Activated naive CD4-positive, alpha-beta T cell treated with anti-CD3 and anti-CD28 coated beads for 36 hours (primary cell): ENCODE measurements at regions of chr7 and their contacts with region 1.

Region 1: GRCh38 chr7:121994625-121995410 is 121.9 kb downstream of the PTPRZ1 start:
- DNase-seq: peak; percentile 64
- H3K4me3 Mint-ChIP-seq: no peak overlapping the region
- H3K27ac Mint-ChIP-seq: no peak overlapping the region
- H3K4me1 Mint-ChIP-seq: no peaks in the 10 kb centered on the region
- H3K27me3 Mint-ChIP-seq: no peaks in the 10 kb centered on the region

Region 2: DNA sequence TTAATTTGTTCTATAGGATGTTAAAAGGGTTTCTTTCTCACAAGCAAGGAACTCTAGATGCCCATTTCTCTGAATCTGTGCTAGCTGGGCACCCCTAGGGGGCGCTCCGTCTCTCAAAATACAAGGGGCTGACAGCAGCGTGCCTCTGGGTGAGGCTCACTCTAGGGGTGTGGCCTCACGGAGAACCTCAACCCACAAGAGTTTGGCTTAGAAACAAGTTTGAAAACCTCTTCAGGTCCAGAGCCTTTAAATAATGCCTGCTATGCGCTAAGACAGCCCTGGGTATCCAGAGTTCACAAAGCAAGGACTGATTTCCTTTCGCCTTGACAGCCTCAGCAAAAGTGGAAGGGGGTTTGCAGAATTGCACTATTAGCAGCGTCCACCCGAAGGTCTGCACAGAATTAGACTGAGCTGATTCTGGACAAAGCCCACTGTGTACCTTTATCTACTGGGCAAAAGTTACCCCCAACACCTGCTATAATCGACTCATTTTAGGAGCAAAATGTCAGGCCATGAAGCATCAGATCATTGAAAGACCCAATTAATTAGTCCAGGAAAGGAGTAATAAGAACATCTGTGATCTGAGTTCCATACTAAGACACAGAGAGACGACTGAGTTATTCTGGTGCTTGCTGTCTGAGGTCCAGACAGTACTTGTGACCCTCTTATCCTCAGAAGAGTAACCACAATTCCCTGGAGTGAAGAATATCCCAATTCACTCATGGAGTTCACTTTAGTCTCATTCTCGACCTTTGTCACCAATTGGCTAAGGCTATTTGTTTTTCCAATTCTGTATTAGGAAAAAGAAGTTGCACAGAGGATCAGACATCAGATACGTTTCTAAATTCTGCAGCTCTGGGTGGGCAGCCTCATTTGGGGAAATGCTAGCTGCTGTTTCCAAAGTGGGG is 1006.9 kb before region 1 on chr7:
- CTCF ChIA-PET with region 1: no interaction called
- intact Hi-C with region 1: loop called (anchors 2 kb)
- DNase-seq: peak; percentile 89
- H3K4me3 Mint-ChIP-seq: peak overlapping the region; percentile 71
- H3K27ac Mint-ChIP-seq: no peak overlapping the region
- H3K4me1 Mint-ChIP-seq: peaks cover 14% of the 10 kb centered on the region
- H3K27me3 Mint-ChIP-seq: peaks cover 43% of the 10 kb centered on the region

Region 3: GRCh38 chr7:121126801-121127534 is 867.9 kb before region 1 on chr7:
- CTCF ChIA-PET with region 1: no interaction called
- intact Hi-C with region 1: loop called (anchors 1 kb)
- DNase-seq: no peak
- H3K4me3 Mint-ChIP-seq: no peak overlapping the region
- H3K27ac Mint-ChIP-seq: no peak overlapping the region
- H3K4me1 Mint-ChIP-seq: no peaks in the 10 kb centered on the region
- H3K27me3 Mint-ChIP-seq: peaks cover 8% of the 10 kb centered on the region

Region 4: DNA sequence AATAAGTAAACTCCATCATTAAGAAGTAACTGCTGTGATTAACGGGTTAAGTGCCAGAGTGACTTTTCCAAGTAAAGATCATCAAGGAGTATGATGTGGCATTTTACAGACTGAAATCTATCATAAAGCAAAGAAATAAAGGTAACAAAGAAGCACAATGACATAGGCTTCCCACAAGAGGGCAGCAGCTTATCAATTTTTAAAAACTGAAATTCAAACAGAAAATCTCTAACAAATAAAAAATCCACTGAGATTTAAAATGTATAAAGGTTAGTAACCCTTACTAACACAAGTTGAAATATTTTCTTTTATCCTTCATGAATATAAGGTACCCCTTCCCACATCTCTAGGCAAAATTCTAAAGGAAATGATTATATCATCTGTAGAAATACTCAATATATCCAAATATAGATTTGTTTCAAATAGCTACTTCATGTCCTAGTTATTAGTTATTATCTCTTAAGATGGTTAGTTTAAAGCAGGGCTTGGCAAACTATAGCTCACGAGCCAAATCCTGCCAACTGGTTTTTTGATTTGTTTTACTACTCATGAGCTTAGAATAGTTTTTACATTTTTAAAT is 627.9 kb before region 1 on chr7:
- CTCF ChIA-PET with region 1: interaction called, 4 read pairs
- intact Hi-C with region 1: loop called (anchors 1 kb)
- DNase-seq: peak; percentile 43
- H3K4me3 Mint-ChIP-seq: no peak overlapping the region
- H3K27ac Mint-ChIP-seq: no peak overlapping the region
- H3K4me1 Mint-ChIP-seq: peaks cover 13% of the 10 kb centered on the region
- H3K27me3 Mint-ChIP-seq: no peaks in the 10 kb centered on the region

Region 5: GRCh38 chr7:121752706-121753105 is 242.1 kb before region 1 on chr7:
- CTCF ChIA-PET with region 1: interaction called, 4 read pairs
- intact Hi-C with region 1: loop called (anchors 1 kb)
- DNase-seq: no peak
- H3K4me3 Mint-ChIP-seq: no peak overlapping the region
- H3K27ac Mint-ChIP-seq: no peak overlapping the region
- H3K4me1 Mint-ChIP-seq: no peaks in the 10 kb centered on the region
- H3K27me3 Mint-ChIP-seq: peaks cover 6% of the 10 kb centered on the region

Region 6: DNA sequence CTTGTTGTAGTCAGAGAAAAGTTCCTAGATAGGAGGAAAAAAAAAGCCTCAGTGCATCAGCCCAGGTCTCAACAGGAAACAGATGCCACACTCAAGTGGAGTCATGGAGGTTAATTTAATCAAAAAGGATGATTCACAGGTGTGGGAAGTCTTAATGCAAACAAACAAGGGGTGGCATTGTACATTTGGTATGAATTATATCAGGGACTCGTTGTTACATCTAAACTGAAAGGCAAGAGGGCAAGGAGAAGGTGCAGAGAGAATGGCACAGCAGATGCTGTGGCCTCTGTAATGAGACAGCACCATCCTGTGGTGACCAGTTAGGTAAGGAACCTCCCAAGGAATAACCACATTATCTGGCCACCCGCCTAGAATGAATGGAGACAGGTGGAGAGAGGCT is 11.9 kb after region 1 on chr7:
- CTCF ChIA-PET with region 1: interaction called, 11 read pairs
- intact Hi-C with region 1: no loop called
- DNase-seq: no peak
- H3K4me3 Mint-ChIP-seq: no peak overlapping the region
- H3K27ac Mint-ChIP-seq: no peak overlapping the region
- H3K4me1 Mint-ChIP-seq: no peaks in the 10 kb centered on the region
- H3K27me3 Mint-ChIP-seq: no peaks in the 10 kb centered on the region